AG04450 (cell line): ENCODE measurements at regions of chr2 and their contacts with region 1.

Region 1: DNA sequence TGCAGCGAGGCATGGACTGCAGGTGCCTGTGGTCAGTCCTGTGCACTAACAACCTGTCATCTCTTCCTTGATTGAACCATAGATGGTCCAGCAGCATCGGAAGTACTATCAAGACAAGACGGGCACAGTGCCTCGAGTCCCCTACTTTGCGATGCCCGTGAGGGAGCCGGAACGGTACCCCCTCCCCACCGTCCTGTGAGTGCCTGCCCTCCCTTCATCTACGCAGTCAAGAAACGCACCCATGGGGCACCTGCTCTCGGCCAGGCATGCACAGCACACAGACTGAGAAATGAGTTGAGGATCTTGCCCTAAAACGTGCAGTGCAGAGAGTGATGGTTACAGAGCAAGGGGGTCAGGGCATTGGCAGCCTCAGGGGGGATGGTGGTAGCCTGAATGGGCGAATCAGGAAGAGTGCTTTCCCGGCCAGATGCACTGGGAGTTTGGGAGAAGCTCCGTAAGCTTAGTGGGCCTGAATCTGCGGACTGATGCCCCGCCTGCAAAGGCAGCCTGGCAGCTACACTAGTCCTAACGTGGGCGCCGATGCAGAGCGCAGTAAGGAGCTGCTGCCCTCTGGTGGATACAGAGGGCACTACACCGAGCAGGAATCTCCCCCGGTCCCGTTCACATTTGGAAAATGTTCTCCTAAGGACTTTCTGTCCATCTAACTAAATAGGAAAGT is 63.6 kb downstream of the CIB4 start:
- DNase-seq: peak; percentile 18
- H3K4me3 ChIP-seq: no peak overlapping the region
- H3K27ac ChIP-seq: no peak overlapping the region
- H3K27me3 ChIP-seq: peaks cover 50% of the 10 kb centered on the region
- CTCF ChIP-seq: peak; percentile 93

Region 2: DNA sequence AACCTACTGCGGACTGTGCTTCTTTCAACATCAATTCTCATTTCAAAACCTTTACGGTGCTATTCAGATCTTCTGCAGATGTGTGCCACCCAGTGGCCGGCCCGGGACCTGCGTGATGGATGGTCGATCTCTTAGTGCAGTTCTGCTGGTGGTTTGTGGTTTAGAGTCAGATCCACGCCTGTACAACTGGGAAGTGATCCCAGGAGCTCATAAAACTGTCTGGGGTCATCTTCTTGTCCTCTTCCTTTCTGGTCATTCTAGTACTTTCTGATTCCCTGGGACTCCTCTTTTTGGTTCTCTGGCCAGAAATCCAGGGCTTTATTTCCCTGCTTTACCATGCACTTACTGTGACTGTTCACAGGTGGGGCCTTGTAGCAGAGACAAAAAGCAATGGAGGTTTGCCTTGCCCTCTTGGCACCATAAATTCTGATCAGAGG is 247.4 kb before region 1 on chr2:
- CTCF ChIA-PET with region 1: interaction called, 10 read pairs
- POLR2A ChIA-PET with region 1: no interaction called
- DNase-seq: peak; percentile 53
- H3K4me3 ChIP-seq: no peak overlapping the region
- H3K27ac ChIP-seq: no peak overlapping the region
- H3K27me3 ChIP-seq: peaks cover 5% of the 10 kb centered on the region
- CTCF ChIP-seq: peak; percentile 93

Region 3: GRCh38 chr2:26567534-26567933 is 10.0 kb before region 1 on chr2:
- CTCF ChIA-PET with region 1: interaction called, 13 read pairs
- POLR2A ChIA-PET with region 1: no interaction called
- DNase-seq: no peak
- H3K4me3 ChIP-seq: no peak overlapping the region
- H3K27ac ChIP-seq: no peak overlapping the region
- H3K27me3 ChIP-seq: peaks cover 56% of the 10 kb centered on the region
- CTCF ChIP-seq: no peak

Region 4: GRCh38 chr2:26597197-26597596 is 19.6 kb after region 1 on chr2:
- CTCF ChIA-PET with region 1: interaction called, 16 read pairs
- POLR2A ChIA-PET with region 1: no interaction called
- DNase-seq: no peak
- H3K4me3 ChIP-seq: no peak overlapping the region
- H3K27ac ChIP-seq: no peak overlapping the region
- H3K27me3 ChIP-seq: peaks cover 29% of the 10 kb centered on the region
- CTCF ChIP-seq: no peak

Region 5: GRCh38 chr2:26631401-26632241 is 54.0 kb after region 1 on chr2:
- CTCF ChIA-PET with region 1: no interaction called
- POLR2A ChIA-PET with region 1: no interaction called
- DNase-seq: no peak
- H3K4me3 ChIP-seq: no peak overlapping the region
- H3K27ac ChIP-seq: no peak overlapping the region
- H3K27me3 ChIP-seq: peaks cover 42% of the 10 kb centered on the region
- CTCF ChIP-seq: no peak

Region 6: DNA sequence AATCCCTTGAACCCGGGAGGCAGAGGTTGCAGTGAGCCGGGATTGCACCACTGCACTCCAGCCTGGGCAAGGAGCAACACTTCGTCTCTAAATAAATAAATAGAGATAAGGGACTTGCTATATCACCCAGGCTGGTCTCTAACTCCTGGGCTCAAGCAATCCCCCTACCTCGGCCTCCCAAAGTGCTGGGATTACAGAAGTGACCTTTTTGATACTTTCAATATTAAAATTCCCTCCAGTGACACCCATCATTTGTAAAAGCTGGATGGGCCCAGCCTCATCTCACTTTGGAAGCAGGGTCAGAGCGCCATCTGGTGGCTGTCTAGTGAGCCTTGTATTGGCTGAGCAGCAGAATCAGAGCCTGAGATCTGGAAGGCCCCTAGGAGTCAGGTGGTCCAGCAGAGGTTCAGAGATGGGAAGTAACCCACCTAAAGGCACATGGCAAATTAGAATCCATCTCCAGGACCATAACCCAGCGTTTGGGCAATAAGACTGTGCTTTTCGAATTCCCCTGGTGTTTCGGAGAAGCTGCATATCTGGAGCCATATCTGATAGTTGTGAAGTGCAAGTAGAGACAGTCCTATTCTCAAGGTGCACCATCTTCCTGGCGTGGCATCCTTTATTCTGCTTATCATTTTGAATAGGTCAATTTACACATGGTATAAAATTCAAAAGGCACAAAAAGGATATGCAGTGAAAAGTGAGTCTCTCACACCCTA is 168.2 kb after region 1 on chr2:
- CTCF ChIA-PET with region 1: interaction called, 35 read pairs
- POLR2A ChIA-PET with region 1: no interaction called
- DNase-seq: peak; percentile 56
- H3K4me3 ChIP-seq: no peak overlapping the region
- H3K27ac ChIP-seq: no peak overlapping the region
- H3K27me3 ChIP-seq: peaks cover 6% of the 10 kb centered on the region
- CTCF ChIP-seq: peak; percentile 96